Natural killer cell (primary cell): ENCODE measurements at regions of chr1 and their contacts with region 1.

Region 1: DNA sequence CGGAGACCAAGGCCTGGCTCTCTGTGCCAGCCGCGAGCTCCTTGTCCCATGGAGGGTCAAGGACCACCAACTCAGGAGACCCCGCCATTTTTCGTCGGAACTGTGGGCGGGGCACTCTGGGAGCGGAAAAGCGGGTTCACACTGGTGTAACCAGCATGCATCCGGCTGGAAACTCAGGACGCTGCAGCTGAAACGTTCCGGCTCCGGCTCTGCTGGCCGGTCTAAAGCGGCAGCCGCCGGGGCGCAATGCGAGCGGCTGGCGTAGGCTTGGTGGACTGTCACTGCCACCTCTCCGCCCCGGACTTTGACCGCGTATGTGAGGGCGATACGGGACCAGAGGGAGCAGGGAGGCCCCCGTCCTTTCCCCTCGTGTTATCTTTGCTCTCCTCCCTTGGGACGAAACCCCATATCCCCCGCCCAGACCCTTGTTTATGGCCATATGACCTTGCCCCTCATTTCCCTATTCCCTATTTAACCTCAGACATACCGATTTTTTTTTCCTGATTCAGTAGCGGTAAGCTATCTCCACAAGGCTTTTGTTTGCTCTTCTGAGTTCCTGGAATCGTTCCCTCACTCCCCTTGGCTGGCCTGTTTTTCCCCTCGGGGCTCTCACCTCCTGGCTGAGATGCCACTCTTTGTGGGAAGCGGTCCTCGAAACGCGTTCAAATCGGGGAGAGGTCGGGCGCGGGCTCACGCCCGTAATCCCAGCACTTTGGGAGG is at the starts of genes NSL1 and TATDN3:
- DNase-seq: peak; percentile 97
- ATAC-seq: peak; percentile 95 to 99 (median 95)
- H3K4me3 ChIP-seq: peak within 1 kb of the TSS; percentile 95
- H3K4me3 Mint-ChIP-seq: peak within 1 kb of the TSS; percentile 97
- H3K27ac ChIP-seq: peak within 1 kb of the TSS; percentile 98
- H3K27ac Mint-ChIP-seq: peak within 1 kb of the TSS; percentile 88 to 95
- H3K4me1 ChIP-seq: peaks cover 28% of the 10 kb centered on the region
- H3K4me1 Mint-ChIP-seq: peaks cover 0 to 38% of the 10 kb centered on the region in 2 donors
- H3K27me3 ChIP-seq: no peaks in the 10 kb centered on the region
- H3K27me3 Mint-ChIP-seq: no peaks in the 10 kb centered on the region
- CTCF ChIP-seq: no peak
- total RNA-seq, gene NSL1: 17.0 to 23.8 (median 23.4) TPM
- total RNA-seq, gene TATDN3: 11.6 to 14.6 (median 13.4) TPM

Region 2: GRCh38 chr1:212132025-212132424 is 659.8 kb before region 1 on chr1:
- intact Hi-C with region 1: no loop called
- DNase-seq: peak; percentile 15 to 28
- ATAC-seq: peak; percentile 90 to 98 (median 92)
- H3K4me3 ChIP-seq: no peak overlapping the region
- H3K4me3 Mint-ChIP-seq: no peak overlapping the region
- H3K27ac ChIP-seq: peak overlapping the region; percentile 4
- H3K27ac Mint-ChIP-seq: peak overlapping the region; percentile 1 to 27
- H3K4me1 ChIP-seq: peaks cover 11% of the 10 kb centered on the region
- H3K4me1 Mint-ChIP-seq: peaks cover 11 to 14% of the 10 kb centered on the region in 2 donors
- H3K27me3 ChIP-seq: no peaks in the 10 kb centered on the region
- H3K27me3 Mint-ChIP-seq: no peaks in the 10 kb centered on the region
- CTCF ChIP-seq: no peak

Region 3: GRCh38 chr1:212814537-212815334 is 22.9 kb after region 1 on chr1:
- intact Hi-C with region 1: no loop called
- DNase-seq: peak in 1 of 2 donors; percentile 38
- ATAC-seq: no peak
- H3K4me3 ChIP-seq: no peak overlapping the region
- H3K4me3 Mint-ChIP-seq: no peak overlapping the region
- H3K27ac ChIP-seq: no peak overlapping the region
- H3K27ac Mint-ChIP-seq: no peak overlapping the region
- H3K4me1 ChIP-seq: no peaks in the 10 kb centered on the region
- H3K4me1 Mint-ChIP-seq: peaks cover 0 to 4% of the 10 kb centered on the region in 2 donors
- H3K27me3 ChIP-seq: no peaks in the 10 kb centered on the region
- H3K27me3 Mint-ChIP-seq: peaks cover 0 to 3% of the 10 kb centered on the region in 2 donors
- CTCF ChIP-seq: no peak

Region 4: DNA sequence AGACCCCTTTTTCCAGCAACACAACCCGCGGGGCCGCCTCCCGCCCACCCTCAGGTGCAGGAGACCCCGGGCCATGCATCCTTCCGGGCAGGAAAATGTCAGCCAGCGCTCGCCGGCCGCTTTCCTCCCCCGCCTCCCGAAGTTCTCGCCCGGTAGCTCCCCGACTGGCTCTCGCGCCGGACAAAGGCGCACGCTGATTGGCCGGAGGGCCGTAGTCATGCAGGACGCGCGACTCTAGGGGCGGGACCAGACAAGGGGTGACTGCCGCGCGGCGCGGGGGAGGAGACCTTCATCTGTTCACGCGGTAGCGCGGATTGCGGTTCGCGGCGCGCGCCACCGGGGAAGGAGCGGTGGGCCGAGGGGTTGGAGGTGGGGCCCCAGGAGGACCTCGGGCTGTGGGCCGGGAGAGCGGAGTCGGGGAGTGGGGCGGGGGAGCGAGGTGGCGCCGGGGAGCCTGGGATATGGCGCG is 66.2 kb after region 1 on chr1 and contains the start of gene FLVCR1:
- intact Hi-C with region 1: loop called (anchors 5 kb)
- DNase-seq: peak; percentile 89 to 94
- ATAC-seq: peak; percentile 98 to 100 (median 98)
- H3K4me3 ChIP-seq: peak within 1 kb of the TSS; percentile 79
- H3K4me3 Mint-ChIP-seq: peak within 1 kb of the TSS; percentile 95
- H3K27ac ChIP-seq: peak within 1 kb of the TSS; percentile 75
- H3K27ac Mint-ChIP-seq: peak within 1 kb of the TSS; percentile 87 to 95
- H3K4me1 ChIP-seq: peaks cover 26% of the 10 kb centered on the region
- H3K4me1 Mint-ChIP-seq: peaks cover 13 to 29% of the 10 kb centered on the region in 2 donors
- H3K27me3 ChIP-seq: no peaks in the 10 kb centered on the region
- H3K27me3 Mint-ChIP-seq: no peaks in the 10 kb centered on the region
- CTCF ChIP-seq: no peak
- total RNA-seq, gene FLVCR1: 8.1 to 15.0 (median 11.4) TPM

Region 5: GRCh38 chr1:213162338-213162737 is 370.5 kb after region 1 on chr1:
- intact Hi-C with region 1: no loop called
- DNase-seq: no peak
- ATAC-seq: no peak
- H3K4me3 ChIP-seq: no peak overlapping the region
- H3K4me3 Mint-ChIP-seq: no peak overlapping the region
- H3K27ac ChIP-seq: no peak overlapping the region
- H3K27ac Mint-ChIP-seq: no peak overlapping the region
- H3K4me1 ChIP-seq: no peaks in the 10 kb centered on the region
- H3K4me1 Mint-ChIP-seq: peaks cover 0 to 11% of the 10 kb centered on the region in 2 donors
- H3K27me3 ChIP-seq: no peaks in the 10 kb centered on the region
- H3K27me3 Mint-ChIP-seq: no peaks in the 10 kb centered on the region
- CTCF ChIP-seq: no peak

Region 6: GRCh38 chr1:213669964-213670691 is 878.3 kb after region 1 on chr1:
- intact Hi-C with region 1: no loop called
- DNase-seq: peak in 1 of 2 donors; percentile 74
- ATAC-seq: no peak
- H3K4me3 ChIP-seq: no peak overlapping the region
- H3K4me3 Mint-ChIP-seq: no peak overlapping the region
- H3K27ac ChIP-seq: no peak overlapping the region
- H3K27ac Mint-ChIP-seq: no peak overlapping the region
- H3K4me1 ChIP-seq: no peaks in the 10 kb centered on the region
- H3K4me1 Mint-ChIP-seq: no peaks in the 10 kb centered on the region
- H3K27me3 ChIP-seq: no peaks in the 10 kb centered on the region
- H3K27me3 Mint-ChIP-seq: no peaks in the 10 kb centered on the region
- CTCF ChIP-seq: no peak